Activated CD4-positive, alpha-beta T cell treated with anti-CD3 and anti-CD28 coated beads, Interleukin-2, amount 10 ng/mL, durations not matched to agents 24 days and 14 days (primary cell): ENCODE measurements at regions of chr1 and their contacts with region 1.

Region 1: GRCh38 chr1:89692601-89693521 is 59.9 kb downstream of the LRRC8C start:
- DNase-seq: no peak
- H3K4me3 Mint-ChIP-seq: peak overlapping the region; percentile 51
- H3K27ac Mint-ChIP-seq: peak overlapping the region; percentile 85
- H3K4me1 Mint-ChIP-seq: peaks cover 64% of the 10 kb centered on the region
- H3K27me3 Mint-ChIP-seq: no peaks in the 10 kb centered on the region

Region 2: GRCh38 chr1:89670163-89670562 is 22.7 kb before region 1 on chr1:
- intact Hi-C with region 1: loop called (anchors 2 kb)
- DNase-seq: peak; percentile 70
- H3K4me3 Mint-ChIP-seq: peak overlapping the region; percentile 30
- H3K27ac Mint-ChIP-seq: peak overlapping the region; percentile 74
- H3K4me1 Mint-ChIP-seq: peaks cover 73% of the 10 kb centered on the region
- H3K27me3 Mint-ChIP-seq: no peaks in the 10 kb centered on the region

Region 3: DNA sequence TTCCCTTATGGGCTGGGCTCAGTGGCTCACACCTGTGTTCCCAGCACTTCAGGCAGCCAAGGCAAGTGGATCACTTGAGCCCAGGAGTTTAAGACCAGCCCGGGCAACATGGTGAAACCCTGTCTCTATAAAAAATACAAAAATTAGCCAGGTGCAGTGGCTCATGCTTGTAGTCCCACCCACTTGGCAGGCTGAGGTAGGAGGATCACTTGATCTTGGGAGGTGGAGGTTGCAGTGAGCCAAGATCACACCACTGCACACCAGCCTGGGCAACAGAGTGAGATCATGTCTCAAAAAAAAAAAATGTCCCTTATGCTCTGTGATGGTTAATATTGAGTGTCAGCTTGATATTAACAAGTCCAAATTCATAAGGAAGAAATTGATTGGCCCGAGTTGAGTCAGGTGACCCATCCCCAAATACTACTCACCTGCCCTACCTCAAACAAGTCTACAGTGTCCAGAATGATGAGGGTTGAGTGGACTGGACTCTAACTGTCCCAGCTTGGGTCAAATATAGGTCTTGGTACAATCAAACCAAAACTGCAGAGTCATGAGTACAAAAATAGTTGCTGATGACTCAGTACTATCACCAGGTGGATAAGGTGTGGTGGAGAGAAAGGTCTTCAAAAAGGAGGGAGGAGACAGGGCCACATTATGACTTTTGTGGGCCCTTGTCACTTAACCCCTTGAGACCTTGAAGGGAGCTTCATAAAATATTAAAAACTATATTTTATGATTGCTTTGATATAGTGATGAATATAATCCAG is 463.0 kb after region 1 on chr1:
- intact Hi-C with region 1: no loop called
- DNase-seq: no peak
- H3K4me3 Mint-ChIP-seq: no peak overlapping the region
- H3K27ac Mint-ChIP-seq: no peak overlapping the region
- H3K4me1 Mint-ChIP-seq: no peaks in the 10 kb centered on the region
- H3K27me3 Mint-ChIP-seq: peaks cover 3% of the 10 kb centered on the region